ENCODE measurements at regions of chr20 and their contacts with region 1.

Region 1: GRCh38 chr20:48635433-48636310 is 192.1 kb downstream of the PREX1 start:
- DNase-seq: peak; percentile 77 to 84
- H3K4me3 ChIP-seq: no peak overlapping the region
- H3K4me3 Mint-ChIP-seq: no peak overlapping the region
- H3K27ac Mint-ChIP-seq: no peak overlapping the region
- H3K4me1 ChIP-seq: no peaks in the 10 kb centered on the region
- H3K4me1 Mint-ChIP-seq: no peaks in the 10 kb centered on the region
- H3K27me3 ChIP-seq: no peaks in the 10 kb centered on the region; the same call in 1 of the 2 replicates
- H3K27me3 Mint-ChIP-seq: peaks cover 11% of the 10 kb centered on the region
- CTCF ChIP-seq: peak; percentile 94 to 99

Region 2: GRCh38 chr20:48107549-48107948 is 528.1 kb before region 1 on chr20:
- CTCF ChIA-PET with region 1: no interaction called
- POLR2A ChIA-PET with region 1: no interaction called
- intact Hi-C with region 1: no loop called
- DNase-seq: no peak
- H3K4me3 ChIP-seq: no peak overlapping the region
- H3K4me3 Mint-ChIP-seq: no peak overlapping the region
- H3K27ac Mint-ChIP-seq: no peak overlapping the region
- H3K4me1 ChIP-seq: no peaks in the 10 kb centered on the region
- H3K4me1 Mint-ChIP-seq: no peaks in the 10 kb centered on the region
- H3K27me3 ChIP-seq: no peaks in the 10 kb centered on the region
- H3K27me3 Mint-ChIP-seq: peaks cover 10% of the 10 kb centered on the region
- CTCF ChIP-seq: no peak

Region 3: GRCh38 chr20:48603443-48604391 is 32.0 kb before region 1 on chr20:
- CTCF ChIA-PET with region 1: no interaction called
- POLR2A ChIA-PET with region 1: no interaction called
- intact Hi-C with region 1: no loop called
- DNase-seq: peak in 1 of 2 experiments; percentile 52
- H3K4me3 ChIP-seq: no peak overlapping the region
- H3K4me3 Mint-ChIP-seq: no peak overlapping the region
- H3K27ac Mint-ChIP-seq: no peak overlapping the region
- H3K4me1 ChIP-seq: 0 out of 2 replicates have a peak, but pooled peaks cover 1% of the 10 kb centered on the region
- H3K4me1 Mint-ChIP-seq: no peaks in the 10 kb centered on the region
- H3K27me3 ChIP-seq: no peaks in the 10 kb centered on the region
- H3K27me3 Mint-ChIP-seq: no peaks in the 10 kb centered on the region
- CTCF ChIP-seq: no peak

Region 4: DNA sequence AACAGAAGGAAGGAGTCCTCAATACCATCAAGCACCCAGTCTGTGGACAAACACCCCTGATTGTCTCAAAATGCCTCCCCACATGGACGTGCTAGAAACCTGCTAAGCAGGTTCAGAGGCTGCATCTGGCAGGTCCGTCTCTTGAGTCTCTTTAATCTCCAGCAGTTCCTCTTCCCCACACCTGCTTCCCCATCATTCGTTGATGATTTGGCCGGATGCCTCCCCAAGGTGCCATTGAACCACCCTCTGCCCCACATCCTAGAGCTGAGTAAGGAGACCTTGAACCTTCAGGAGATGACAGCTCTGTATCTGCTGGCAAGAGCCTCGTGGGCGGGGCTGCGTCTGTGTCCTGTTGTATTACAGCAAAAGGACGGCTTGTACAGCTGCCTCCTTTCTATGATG is 12.9 kb after region 1 on chr20:
- CTCF ChIA-PET with region 1: no interaction called
- POLR2A ChIA-PET with region 1: no interaction called
- intact Hi-C with region 1: no loop called
- DNase-seq: peak in 1 of 2 experiments; percentile 43
- H3K4me3 ChIP-seq: no peak overlapping the region
- H3K4me3 Mint-ChIP-seq: no peak overlapping the region
- H3K27ac Mint-ChIP-seq: no peak overlapping the region
- H3K4me1 ChIP-seq: peaks cover 9% of the 10 kb centered on the region; the same call in 1 of the 2 replicates
- H3K4me1 Mint-ChIP-seq: peaks cover 8% of the 10 kb centered on the region
- H3K27me3 ChIP-seq: no peaks in the 10 kb centered on the region
- H3K27me3 Mint-ChIP-seq: no peaks in the 10 kb centered on the region
- CTCF ChIP-seq: no peak

Region 5: GRCh38 chr20:48904365-48905296 is 269.0 kb after region 1 on chr20:
- CTCF ChIA-PET with region 1: interaction called, 4 read pairs
- POLR2A ChIA-PET with region 1: no interaction called
- intact Hi-C with region 1: loop called (anchors 1 kb)
- DNase-seq: peak; percentile 75 to 86
- H3K4me3 ChIP-seq: no peak overlapping the region
- H3K4me3 Mint-ChIP-seq: no peak overlapping the region
- H3K27ac Mint-ChIP-seq: no peak overlapping the region
- H3K4me1 ChIP-seq: 0 out of 2 replicates have a peak, but pooled peaks cover 8% of the 10 kb centered on the region
- H3K4me1 Mint-ChIP-seq: peaks cover 9% of the 10 kb centered on the region
- H3K27me3 ChIP-seq: no peaks in the 10 kb centered on the region; the same call in 1 of the 2 replicates
- H3K27me3 Mint-ChIP-seq: peaks cover 15% of the 10 kb centered on the region
- CTCF ChIP-seq: peak; percentile 95 to 97

Measured in Caco-2 (cell line).